Endothelial cell of umbilical vein (primary cell): ENCODE measurements at regions of chr9 and their contacts with region 1.

Region 1: DNA sequence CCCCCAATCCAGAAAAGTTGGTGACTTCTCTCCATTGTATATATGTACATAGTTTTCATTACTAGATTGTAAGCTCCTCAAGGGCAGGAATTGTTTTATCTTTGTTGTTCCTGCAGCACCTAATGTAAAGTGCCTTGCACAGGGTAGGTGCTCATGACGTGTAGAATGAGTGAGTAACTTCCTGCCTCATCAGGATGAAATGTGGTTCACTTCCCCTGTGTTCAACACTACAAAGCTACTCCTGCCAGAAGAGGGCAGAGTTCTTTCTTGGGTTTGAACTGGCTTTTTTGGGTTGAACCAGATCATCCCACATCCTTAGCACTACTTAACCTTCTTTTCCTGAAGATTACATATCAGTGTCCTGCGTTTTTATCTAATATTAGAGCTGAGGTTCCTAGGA is 23.9 kb downstream of the GTF3C4 start:
- DNase-seq: no peak
- H3K4me3 ChIP-seq: no peak overlapping the region
- H3K27ac ChIP-seq: no peak overlapping the region
- H3K4me1 ChIP-seq: no peaks in the 10 kb centered on the region
- H3K27me3 ChIP-seq: no peaks in the 10 kb centered on the region
- CTCF ChIP-seq: peak in 1 of 2 donors; percentile 14
- POLR2A ChIP-seq: no peak

Region 2: GRCh38 chr9:132677976-132678375 is 16.2 kb before region 1 on chr9:
- CTCF ChIA-PET with region 1: interaction called, 11 read pairs
- POLR2A ChIA-PET with region 1: no interaction called
- dilution Hi-C with region 1: no loop called
- intact Hi-C with region 1: no loop called
- DNase-seq: no peak
- H3K4me3 ChIP-seq: no peak overlapping the region
- H3K27ac ChIP-seq: no peak overlapping the region
- H3K4me1 ChIP-seq: peaks cover 7% of the 10 kb centered on the region
- H3K27me3 ChIP-seq: no peaks in the 10 kb centered on the region
- CTCF ChIP-seq: no peak
- POLR2A ChIP-seq: no peak